ENCODE measurements at regions of chr10 and their contacts with region 1.

Region 1: DNA sequence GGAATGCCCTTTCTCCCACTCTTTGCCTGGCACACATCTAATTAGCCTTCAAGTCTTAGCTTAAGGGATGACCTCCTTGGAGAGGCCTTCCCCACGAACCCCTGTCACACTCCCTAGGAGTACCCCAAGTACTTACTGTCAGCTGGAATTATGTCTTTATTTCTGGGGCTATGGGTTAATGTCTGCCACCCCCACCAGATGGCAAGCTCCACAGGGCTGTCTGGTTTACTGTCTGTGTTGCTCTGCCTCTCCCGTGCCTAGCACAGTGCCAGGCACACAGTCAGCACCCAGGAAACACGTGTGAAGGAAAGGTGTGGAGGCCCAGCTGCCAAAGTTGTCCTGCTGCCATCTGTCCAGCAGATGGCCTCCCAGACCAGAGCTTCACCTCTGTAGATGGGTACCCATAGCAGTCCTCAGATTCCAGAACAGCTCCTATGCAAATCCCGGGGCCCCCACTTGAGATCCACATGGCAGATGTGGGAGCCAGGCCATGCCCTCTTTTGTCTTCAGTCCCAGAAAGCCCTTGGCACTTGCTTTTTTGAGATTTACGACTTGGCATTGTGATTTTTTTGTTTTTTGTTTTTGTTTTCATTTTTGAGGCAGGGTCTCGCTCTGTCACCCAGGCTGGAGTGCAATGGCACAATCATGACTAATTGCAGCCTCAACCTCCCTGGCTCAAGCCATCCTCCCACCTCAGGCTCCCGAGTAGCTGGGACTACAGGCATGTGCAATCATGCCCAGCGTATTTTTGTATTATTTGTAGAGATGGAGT is 17.2 kb upstream of the PALD1 start:
- DNase-seq: peak; percentile 72
- H3K4me3 Mint-ChIP-seq: no peak overlapping the region
- H3K27ac Mint-ChIP-seq: no peak overlapping the region
- H3K4me1 Mint-ChIP-seq: peaks cover 5% of the 10 kb centered on the region
- H3K27me3 Mint-ChIP-seq: peaks cover 33% of the 10 kb centered on the region

Region 2: GRCh38 chr10:70445718-70446657 is 15.4 kb before region 1 on chr10:
- CTCF ChIA-PET with region 1: interaction called, 19 read pairs
- intact Hi-C with region 1: no loop called
- DNase-seq: no peak
- H3K4me3 Mint-ChIP-seq: no peak overlapping the region
- H3K27ac Mint-ChIP-seq: no peak overlapping the region
- H3K4me1 Mint-ChIP-seq: peaks cover 3% of the 10 kb centered on the region
- H3K27me3 Mint-ChIP-seq: peaks cover 19% of the 10 kb centered on the region

Region 3: GRCh38 chr10:70528726-70529362 is 67.4 kb after region 1 on chr10:
- CTCF ChIA-PET with region 1: interaction called, 13 read pairs
- intact Hi-C with region 1: no loop called
- DNase-seq: no peak
- H3K4me3 Mint-ChIP-seq: no peak overlapping the region
- H3K27ac Mint-ChIP-seq: no peak overlapping the region
- H3K4me1 Mint-ChIP-seq: no peaks in the 10 kb centered on the region
- H3K27me3 Mint-ChIP-seq: no peaks in the 10 kb centered on the region

Region 4: DNA sequence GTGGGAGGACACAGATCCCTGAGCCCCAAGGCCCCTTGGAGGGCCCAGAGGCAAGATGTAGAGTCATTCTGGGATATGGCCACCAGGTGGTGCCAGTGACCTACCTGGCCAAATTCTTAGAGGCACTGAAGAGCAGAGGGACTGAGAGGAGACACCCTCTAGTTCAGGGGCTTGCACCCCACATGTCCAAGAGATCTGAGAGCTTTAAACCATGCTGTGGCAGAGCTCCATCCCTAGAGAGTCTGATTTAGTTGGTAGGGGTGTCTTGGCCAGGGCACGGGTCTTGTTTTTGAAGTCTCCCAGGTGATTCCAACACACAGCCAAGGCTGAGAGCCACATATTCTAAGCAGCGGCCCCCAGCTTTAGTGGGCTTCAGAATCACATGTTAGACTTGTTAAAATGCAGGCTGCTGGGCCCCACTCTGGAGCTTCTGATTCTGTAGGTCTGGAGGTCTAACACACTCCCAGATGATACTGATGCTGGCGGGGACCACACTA is 88.6 kb after region 1 on chr10:
- CTCF ChIA-PET with region 1: interaction called, 25 read pairs
- intact Hi-C with region 1: no loop called
- DNase-seq: peak; percentile 82
- H3K4me3 Mint-ChIP-seq: no peak overlapping the region
- H3K27ac Mint-ChIP-seq: no peak overlapping the region
- H3K4me1 Mint-ChIP-seq: no peaks in the 10 kb centered on the region
- H3K27me3 Mint-ChIP-seq: no peaks in the 10 kb centered on the region

Region 5: DNA sequence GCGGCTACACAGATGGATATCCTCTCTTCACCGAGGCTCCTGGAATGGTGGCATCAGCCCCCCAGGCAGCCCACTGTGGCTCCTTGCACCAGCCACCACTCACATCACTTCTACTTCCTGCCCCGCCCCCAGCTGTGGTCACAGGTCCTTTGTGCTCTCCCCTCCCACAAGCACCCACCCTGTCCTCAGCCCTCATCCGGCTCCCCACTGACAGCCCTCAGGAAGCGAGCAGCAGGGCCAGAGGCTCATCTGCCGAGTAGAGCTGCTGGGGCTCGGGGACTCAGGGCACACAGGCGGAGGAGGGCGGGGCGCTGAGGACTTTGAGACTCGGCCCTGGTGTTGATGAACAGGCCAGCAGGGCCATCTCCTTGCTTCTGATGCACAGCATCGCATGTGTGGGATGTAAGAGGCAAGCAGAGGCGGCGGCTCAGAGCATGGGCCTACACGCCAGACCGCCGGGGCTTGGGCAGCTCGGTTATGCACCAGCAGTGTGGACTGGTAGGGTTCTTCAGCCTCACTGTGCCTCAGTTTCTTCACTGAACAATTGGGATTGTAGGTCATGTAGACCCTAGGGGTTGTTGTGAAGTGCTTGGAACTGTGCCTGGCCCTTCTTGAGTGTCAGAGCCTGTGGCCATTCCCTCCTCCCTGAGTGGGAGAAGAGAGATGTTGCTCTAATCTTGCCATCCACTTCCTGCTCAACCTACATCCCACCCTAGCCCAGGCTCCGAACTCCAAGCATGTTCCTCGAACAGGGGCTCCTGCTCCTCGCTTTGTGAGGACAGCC is 141.5 kb after region 1 on chr10 and contains the start of gene PRF1:
- CTCF ChIA-PET with region 1: no interaction called
- intact Hi-C with region 1: no loop called
- DNase-seq: peak; percentile 84
- H3K4me3 Mint-ChIP-seq: peak within 1 kb of the TSS; percentile 82
- H3K27ac Mint-ChIP-seq: peak within 1 kb of the TSS; percentile 68
- H3K4me1 Mint-ChIP-seq: peaks cover 33% of the 10 kb centered on the region
- H3K27me3 Mint-ChIP-seq: no peaks in the 10 kb centered on the region
- total RNA-seq, gene PRF1: 7.5 to 8.2 TPM

Region 6: GRCh38 chr10:70880077-70880534 is 418.7 kb after region 1 on chr10:
- CTCF ChIA-PET with region 1: interaction called, 3 read pairs
- intact Hi-C with region 1: loop called (anchors 2 kb)
- DNase-seq: peak; percentile 91
- H3K4me3 Mint-ChIP-seq: no peak overlapping the region
- H3K27ac Mint-ChIP-seq: no peak overlapping the region
- H3K4me1 Mint-ChIP-seq: no peaks in the 10 kb centered on the region
- H3K27me3 Mint-ChIP-seq: no peaks in the 10 kb centered on the region

Measured in activated naive CD4-positive, alpha-beta T cell treated with anti-CD3 and anti-CD28 coated beads for 36 hours (primary cell).